Sigmoid colon (tissue), 7 donors: ENCODE measurements at regions of chr6 and their contacts with region 1.

Region 1: GRCh38 chr6:35688581-35689322 is at the start of gene FKBP5:
- DNase-seq: peak; percentile 99
- H3K4me3 ChIP-seq: peak within 1 kb of the TSS; percentile 75 to 100 (median 90)
- H3K27ac ChIP-seq: peak within 1 kb of the TSS; percentile 97 to 100 (median 98)
- H3K4me1 ChIP-seq: peaks cover 0 to 51% (median 43%) of the 10 kb centered on the region in 4 donors
- H3K27me3 ChIP-seq: no peaks in the 10 kb centered on the region
- CTCF ChIP-seq: no peak
- EP300 ChIP-seq: no peak
- POLR2A ChIP-seq: peak in 1 of 2 donors; percentile 62
- total RNA-seq, gene FKBP5: 200 to 326 (median 258) TPM

Region 2: GRCh38 chr6:35522660-35523658 is 165.8 kb before region 1 on chr6:
- intact Hi-C with region 1: loop called (anchors 5 kb)
- DNase-seq: peak; percentile 88
- H3K4me3 ChIP-seq: peak overlapping the region in 1 of 4 donors; percentile 26
- H3K27ac ChIP-seq: no peak overlapping the region
- H3K4me1 ChIP-seq: peaks cover 0 to 9% (median 2%) of the 10 kb centered on the region in 4 donors
- H3K27me3 ChIP-seq: no peaks in the 10 kb centered on the region
- CTCF ChIP-seq: peak; percentile 89 to 100 (median 96)
- EP300 ChIP-seq: no peak
- POLR2A ChIP-seq: no peak

Region 3: DNA sequence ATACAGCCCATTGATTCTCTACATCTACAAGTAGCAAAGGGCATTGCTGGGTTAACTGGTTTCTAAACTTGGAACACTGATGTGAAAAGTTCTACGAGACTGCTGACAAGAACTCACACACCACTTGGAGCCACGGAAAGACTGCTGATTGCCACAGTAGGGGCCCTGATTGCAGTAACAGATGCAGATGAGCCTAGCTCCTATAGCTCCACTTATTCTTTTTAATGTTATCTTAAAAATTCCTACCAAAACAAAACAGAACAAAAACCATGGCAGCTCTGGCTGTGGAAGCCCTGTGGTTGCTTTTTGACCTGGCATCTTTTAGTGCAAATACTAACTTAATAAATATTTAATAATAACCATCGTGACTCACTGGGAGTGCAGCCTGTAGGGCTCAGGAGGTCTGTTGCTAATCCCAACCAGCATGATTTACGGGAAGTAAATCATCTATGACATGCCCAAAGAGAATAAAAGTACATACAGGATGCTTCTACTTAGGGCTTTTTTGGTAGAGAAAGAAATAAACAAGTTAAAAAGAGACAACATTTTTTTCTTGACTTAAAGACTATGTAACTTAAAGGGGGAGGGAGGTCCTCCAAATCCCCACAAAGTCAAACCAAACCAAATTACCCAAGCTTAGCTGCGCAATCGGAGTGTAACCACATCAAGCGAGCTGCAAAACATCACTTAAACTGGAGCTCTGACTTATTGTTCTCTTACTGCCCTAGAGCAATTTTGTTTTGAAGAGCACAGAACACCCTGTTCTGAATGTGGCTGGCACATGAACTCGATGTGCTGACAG is 87.2 kb before region 1 on chr6:
- intact Hi-C with region 1: loop called (anchors 5 kb)
- DNase-seq: peak; percentile 92
- H3K4me3 ChIP-seq: peak overlapping the region in 3 of 4 donors; percentile 21 to 31 (median 21)
- H3K27ac ChIP-seq: peak overlapping the region; percentile 88 to 98 (median 91)
- H3K4me1 ChIP-seq: peaks cover 0 to 82% (median 75%) of the 10 kb centered on the region in 4 donors
- H3K27me3 ChIP-seq: no peaks in the 10 kb centered on the region
- CTCF ChIP-seq: no peak
- EP300 ChIP-seq: peak; percentile 100
- POLR2A ChIP-seq: no peak

Region 4: GRCh38 chr6:35719830-35720733 is 31.3 kb after region 1 on chr6:
- intact Hi-C with region 1: loop called (anchors 2 kb)
- DNase-seq: peak; percentile 79
- H3K4me3 ChIP-seq: peak overlapping the region in 2 of 4 donors; percentile 3 to 21
- H3K27ac ChIP-seq: peak overlapping the region; percentile 84 to 100 (median 98)
- H3K4me1 ChIP-seq: peaks cover 0 to 80% (median 74%) of the 10 kb centered on the region in 4 donors
- H3K27me3 ChIP-seq: no peaks in the 10 kb centered on the region
- CTCF ChIP-seq: no peak
- EP300 ChIP-seq: peak in 1 of 4 donors; percentile 65
- POLR2A ChIP-seq: no peak